PC-3 (cell line): ENCODE measurements at regions of chr17 and their contacts with region 1.

Region 1: DNA sequence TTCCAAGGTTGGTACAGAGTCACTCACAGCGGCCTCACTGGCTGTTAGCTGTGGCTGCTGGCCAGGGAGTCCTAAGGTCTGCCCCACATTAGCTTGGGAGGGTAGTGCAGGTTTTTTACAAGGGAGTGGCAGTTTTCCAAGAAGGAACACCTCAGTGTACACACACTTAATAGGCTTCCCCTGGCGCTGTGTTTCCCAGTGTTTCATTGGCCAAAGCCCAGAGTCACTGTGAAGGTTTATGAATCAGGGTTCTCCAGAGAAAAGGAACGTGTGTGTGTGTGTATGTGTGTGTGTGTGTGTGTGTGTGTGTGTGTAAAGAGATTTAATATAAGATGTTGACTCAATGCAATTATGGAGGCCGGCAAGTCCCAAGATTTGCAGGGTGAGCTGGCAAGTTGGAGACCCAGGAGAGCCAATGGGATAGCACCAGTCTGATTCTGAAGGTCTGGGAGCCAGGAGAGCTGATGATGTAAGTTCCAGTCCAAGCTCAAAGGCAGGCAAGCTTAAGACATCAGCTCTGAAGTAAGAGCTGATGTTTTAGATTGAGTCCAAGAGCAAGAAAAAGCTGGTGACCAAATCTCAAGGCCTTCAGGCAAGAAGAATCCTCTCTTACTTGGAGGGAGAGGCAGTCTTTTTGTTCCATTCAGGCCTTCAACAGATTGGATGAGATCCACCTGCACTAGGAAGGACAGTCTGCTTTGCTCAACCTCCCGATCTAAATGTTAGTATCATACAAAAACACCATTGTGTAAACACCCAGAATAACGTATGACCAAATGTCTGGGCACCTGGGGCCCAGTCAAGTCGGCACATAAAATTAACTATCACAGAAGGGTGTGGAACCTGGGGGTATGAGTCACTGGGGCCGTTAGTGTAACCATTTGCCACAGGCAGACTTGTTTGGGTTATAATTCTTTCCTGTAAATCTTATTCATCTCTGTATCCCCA is 206.8 kb downstream of the PRKCA start:
- DNase-seq: peak; percentile 100
- ATAC-seq: peak; percentile 85
- H3K4me3 ChIP-seq: peak overlapping the region; percentile 21
- H3K27ac ChIP-seq: peak overlapping the region; percentile 96
- H3K4me1 ChIP-seq: peaks cover 53% of the 10 kb centered on the region
- H3K27me3 ChIP-seq: no peaks in the 10 kb centered on the region
- CTCF ChIP-seq: no peak

Region 2: DNA sequence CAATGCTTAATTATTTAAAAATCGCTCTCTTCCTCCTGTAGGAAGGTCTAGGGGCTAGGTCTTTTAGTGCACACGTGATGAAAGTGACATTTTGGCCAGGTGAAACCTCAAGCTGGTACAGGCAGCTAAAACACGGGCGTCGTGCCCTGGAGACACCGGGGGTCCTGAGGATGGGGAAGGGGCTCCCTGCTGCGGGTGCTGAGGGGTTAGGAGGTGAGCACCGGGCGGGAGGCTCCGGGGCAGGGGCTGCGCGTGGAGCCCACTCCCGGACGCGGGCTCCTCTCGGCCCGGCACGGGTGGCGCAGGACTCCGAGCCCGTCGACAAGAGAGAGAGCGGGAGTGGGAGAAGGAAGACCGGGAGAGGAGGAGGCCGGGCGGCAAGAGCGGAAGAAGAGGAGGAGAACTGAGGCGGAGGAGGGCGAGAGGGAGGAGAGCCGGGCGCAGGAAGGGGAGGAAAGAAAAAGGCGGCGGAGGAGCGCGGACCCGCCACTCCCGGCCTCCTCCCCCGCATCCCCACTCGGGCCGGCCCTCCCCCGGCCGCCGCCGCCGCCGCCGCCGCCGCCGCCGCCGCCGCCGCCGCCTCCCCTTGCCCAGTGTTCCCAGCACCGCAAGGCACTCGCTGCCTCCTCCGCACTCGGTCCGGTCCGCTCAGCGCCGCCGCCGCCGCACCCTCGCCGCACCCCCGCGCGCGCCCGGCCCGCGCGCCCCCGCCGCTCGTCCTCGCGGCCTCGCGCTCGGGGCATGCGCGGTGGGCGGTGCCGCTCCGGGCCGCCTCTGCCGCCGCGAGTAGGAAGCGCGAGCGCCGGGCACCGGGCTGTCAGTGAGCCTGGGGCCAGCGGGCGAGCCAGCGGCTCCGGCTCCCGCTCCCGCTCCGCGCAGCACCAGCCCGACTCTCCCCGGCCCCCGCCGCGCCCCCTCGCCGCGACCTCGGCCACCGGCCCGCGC is 207.1 kb before region 1 on chr17 and contains the start of gene PRKCA:
- CTCF ChIA-PET with region 1: no interaction called
- POLR2A ChIA-PET with region 1: interaction called, 8 read pairs
- intact Hi-C with region 1: loop called (anchors 2 kb)
- DNase-seq: peak; percentile 87
- ATAC-seq: peak; percentile 78
- H3K4me3 ChIP-seq: peak within 1 kb of the TSS; percentile 94
- H3K27ac ChIP-seq: peak within 1 kb of the TSS; percentile 30
- H3K4me1 ChIP-seq: peaks cover 37% of the 10 kb centered on the region
- H3K27me3 ChIP-seq: no peaks in the 10 kb centered on the region
- CTCF ChIP-seq: no peak
- total RNA-seq, gene PRKCA: 22.6 and 28.2 TPM in 2 replicates

Region 3: DNA sequence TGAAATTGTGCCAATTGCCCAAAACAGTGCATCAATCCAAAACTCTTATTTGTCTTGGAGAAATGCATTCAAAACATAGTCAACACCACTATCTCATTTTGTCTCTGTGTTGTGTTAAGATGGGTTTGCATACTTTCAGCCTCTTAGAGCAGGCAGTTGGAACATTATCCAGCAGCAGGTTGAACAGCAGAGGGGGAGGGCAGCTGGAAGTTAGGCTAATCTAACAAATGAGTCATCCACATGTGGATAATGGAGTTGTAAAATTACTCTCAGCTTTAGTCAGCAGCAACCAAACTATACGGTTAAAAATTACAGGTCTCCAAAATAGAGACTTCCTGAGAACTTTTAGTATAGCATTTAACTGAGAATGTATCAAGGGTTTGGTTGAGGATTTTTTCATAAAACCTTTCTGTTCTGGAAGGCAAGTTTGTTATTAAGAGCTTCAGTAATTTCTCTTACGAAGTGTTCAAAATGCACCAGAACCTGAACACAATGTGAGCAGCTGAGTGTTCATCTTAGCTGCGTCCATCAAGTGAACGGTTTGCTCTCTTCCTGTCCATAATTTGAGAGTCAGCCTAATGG is 160.5 kb before region 1 on chr17:
- CTCF ChIA-PET with region 1: no interaction called
- POLR2A ChIA-PET with region 1: no interaction called
- intact Hi-C with region 1: loop called (anchors 1 kb)
- DNase-seq: peak; percentile 92
- ATAC-seq: peak; percentile 82
- H3K4me3 ChIP-seq: peak overlapping the region; percentile 51
- H3K27ac ChIP-seq: peak overlapping the region; percentile 90
- H3K4me1 ChIP-seq: peaks cover 62% of the 10 kb centered on the region
- H3K27me3 ChIP-seq: no peaks in the 10 kb centered on the region
- CTCF ChIP-seq: no peak

Region 4: DNA sequence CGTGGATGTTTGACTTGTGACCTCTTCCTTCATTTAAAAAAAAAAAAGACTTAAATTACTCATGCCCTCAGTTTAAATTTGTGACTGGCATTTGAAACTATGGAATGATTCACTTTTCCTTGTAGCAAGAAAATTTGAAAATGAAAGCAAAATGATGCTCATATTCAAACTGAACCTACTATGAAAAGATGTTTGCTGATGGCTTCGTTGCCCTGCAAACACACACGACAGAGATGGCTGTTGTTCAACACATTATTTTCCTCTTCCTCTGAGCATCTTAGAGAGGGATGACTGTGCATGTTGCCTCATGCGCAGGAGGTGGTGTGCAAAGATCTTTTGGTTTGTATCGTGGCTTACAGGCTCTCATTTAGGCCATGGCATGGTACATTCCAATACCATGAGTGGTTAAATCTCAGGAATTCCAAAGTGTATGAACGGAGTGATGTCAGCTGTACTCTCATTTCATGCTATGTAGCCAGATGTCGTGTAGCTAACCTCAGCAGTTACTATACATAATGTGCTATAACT is 42.3 kb before region 1 on chr17:
- CTCF ChIA-PET with region 1: no interaction called
- POLR2A ChIA-PET with region 1: interaction called, 4 read pairs
- intact Hi-C with region 1: loop called (anchors 1 kb)
- DNase-seq: peak; percentile 99
- ATAC-seq: peak; percentile 92
- H3K4me3 ChIP-seq: peak overlapping the region; percentile 45
- H3K27ac ChIP-seq: peak overlapping the region; percentile 80
- H3K4me1 ChIP-seq: peaks cover 71% of the 10 kb centered on the region
- H3K27me3 ChIP-seq: no peaks in the 10 kb centered on the region
- CTCF ChIP-seq: no peak

Region 5: GRCh38 chr17:66523378-66524200 is 14.4 kb after region 1 on chr17:
- CTCF ChIA-PET with region 1: interaction called, 4 read pairs
- POLR2A ChIA-PET with region 1: interaction called, 7 read pairs
- intact Hi-C with region 1: loop called (anchors 1 kb)
- DNase-seq: no peak
- ATAC-seq: peak; percentile 84
- H3K4me3 ChIP-seq: no peak overlapping the region
- H3K27ac ChIP-seq: peak overlapping the region; percentile 84
- H3K4me1 ChIP-seq: peaks cover 38% of the 10 kb centered on the region
- H3K27me3 ChIP-seq: no peaks in the 10 kb centered on the region
- CTCF ChIP-seq: peak; percentile 17; the same call in 1 of the 2 replicates

Region 6: DNA sequence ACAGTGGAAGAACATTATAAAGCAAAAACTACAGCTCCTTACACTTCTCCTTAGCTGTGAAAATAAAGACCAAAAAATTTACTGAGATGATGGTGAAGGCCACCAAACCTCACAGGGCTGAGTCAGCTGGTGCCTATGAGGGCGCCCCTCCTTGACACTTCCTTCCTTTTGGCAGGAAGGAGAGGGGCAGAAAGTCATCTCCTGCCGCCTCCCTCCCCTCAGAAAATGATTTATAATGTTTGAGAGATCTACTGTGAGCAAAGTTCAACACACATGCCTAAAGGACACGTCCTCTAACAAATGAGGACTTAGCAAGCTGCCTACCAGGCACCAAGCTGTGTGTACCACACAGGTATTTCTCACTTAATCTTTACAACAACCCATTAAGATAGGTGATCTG is 39.0 kb after region 1 on chr17:
- CTCF ChIA-PET with region 1: interaction called, 3 read pairs
- POLR2A ChIA-PET with region 1: interaction called, 10 read pairs
- intact Hi-C with region 1: loop called (anchors 1 kb)
- DNase-seq: peak; percentile 85
- ATAC-seq: peak; percentile 49
- H3K4me3 ChIP-seq: peak overlapping the region; percentile 15; the same call in 1 of the 2 replicates
- H3K27ac ChIP-seq: peak overlapping the region; percentile 98
- H3K4me1 ChIP-seq: peaks cover 76% of the 10 kb centered on the region
- H3K27me3 ChIP-seq: no peaks in the 10 kb centered on the region
- CTCF ChIP-seq: no peak

Region 7: DNA sequence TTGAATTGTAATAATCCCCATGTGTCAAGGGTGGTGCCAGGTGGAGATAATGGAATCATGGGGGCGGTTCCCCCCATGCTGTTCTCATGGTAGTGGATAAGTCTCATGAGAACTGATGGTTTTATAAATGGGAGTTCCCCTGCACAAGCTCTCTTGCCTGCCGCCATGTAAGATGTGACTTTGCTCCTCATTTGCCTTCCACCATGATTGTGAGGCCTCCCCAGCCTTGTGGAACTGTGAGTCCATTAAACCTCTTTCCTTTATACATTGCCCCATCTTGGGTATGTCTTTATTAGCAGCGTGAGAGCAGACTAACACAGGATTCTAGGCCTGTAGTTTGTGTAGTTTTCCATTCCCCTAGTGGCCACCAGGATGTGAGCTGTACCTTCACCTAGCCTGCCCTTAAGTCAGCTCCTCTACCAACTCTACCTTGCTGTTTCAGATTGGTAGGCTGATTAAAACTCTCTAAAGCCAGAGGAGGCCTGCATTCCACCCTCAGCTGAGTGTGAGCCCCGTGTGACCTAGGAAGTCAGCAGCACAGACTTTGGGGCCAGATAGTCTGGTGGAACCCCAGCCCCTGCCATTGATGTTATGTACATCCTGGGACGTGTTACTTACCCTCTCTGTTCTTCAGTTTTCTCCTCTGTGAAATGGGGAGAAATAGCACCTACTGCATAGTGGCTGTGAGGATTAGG is 73.3 kb after region 1 on chr17:
- CTCF ChIA-PET with region 1: no interaction called
- POLR2A ChIA-PET with region 1: no interaction called
- intact Hi-C with region 1: no loop called
- DNase-seq: no peak
- ATAC-seq: no peak
- H3K4me3 ChIP-seq: no peak overlapping the region
- H3K27ac ChIP-seq: no peak overlapping the region
- H3K4me1 ChIP-seq: no peaks in the 10 kb centered on the region
- H3K27me3 ChIP-seq: no peaks in the 10 kb centered on the region
- CTCF ChIP-seq: 0 out of 2 replicates have a peak, but pooled peaks have one; percentile 16

Region 8: DNA sequence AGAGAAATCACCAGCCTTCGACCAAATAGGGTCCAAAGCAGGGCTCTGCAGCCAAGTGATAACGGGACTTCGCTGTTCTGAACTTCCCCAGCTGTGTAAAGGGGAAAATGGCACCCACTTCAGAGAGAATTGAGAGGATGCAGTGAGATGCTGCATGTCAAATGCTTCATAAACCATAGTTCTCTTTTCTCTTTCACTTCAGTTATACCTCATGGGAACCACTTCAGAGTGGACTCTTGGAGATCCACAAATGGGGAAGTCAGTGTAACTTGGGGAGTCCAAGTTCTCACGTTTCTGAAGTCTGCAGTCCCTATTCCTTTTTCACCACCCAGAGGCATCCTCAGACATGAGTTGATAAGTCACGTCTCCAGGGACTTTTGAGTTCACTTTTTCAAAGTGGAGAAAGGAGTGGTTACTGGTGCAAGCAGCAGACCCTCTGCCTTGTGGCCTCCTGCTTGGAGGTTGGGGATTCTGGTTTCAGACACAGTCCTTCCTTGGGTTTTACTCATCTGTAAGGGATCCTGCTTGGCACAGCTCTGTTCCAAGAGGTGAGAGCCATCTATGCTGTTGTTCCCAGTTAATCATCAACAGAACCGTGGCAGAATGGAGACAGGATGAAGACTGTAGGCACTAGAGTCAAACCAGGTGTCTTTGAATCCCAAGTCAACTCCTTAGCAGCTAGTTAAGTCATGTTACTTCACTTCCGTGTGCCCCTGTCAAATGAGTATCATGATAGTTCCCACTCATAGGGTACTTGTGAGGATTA is 1085.1 kb after region 1 on chr17:
- CTCF ChIA-PET with region 1: no interaction called
- POLR2A ChIA-PET with region 1: interaction called, 12 read pairs
- intact Hi-C with region 1: no loop called
- DNase-seq: no peak
- ATAC-seq: no peak
- H3K4me3 ChIP-seq: no peak overlapping the region
- H3K27ac ChIP-seq: no peak overlapping the region
- H3K4me1 ChIP-seq: no peaks in the 10 kb centered on the region
- H3K27me3 ChIP-seq: no peaks in the 10 kb centered on the region
- CTCF ChIP-seq: no peak